ENCODE measurements at regions of chr1 and their contacts with region 1.

Region 1: GRCh38 chr1:160997323-160998038 is 23.5 kb downstream of the F11R start:
- DNase-seq: peak; percentile 83 to 90
- H3K4me3 ChIP-seq: no peak overlapping the region
- H3K27ac ChIP-seq: peak overlapping the region; percentile 33 to 84 (median 71)
- H3K4me1 ChIP-seq: peaks cover 0 to 22% (median 4%) of the 10 kb centered on the region in 4 donors
- H3K27me3 ChIP-seq: no peaks in the 10 kb centered on the region
- CTCF ChIP-seq: peak in 5 of 7 experiments; percentile 53 to 80 (median 71)
- EP300 ChIP-seq: no peak
- POLR2A ChIP-seq: no peak

Region 2: GRCh38 chr1:161098210-161099068 is 101.0 kb after region 1 on chr1 and contains the start of gene KLHDC9:
- intact Hi-C with region 1: loop called (anchors 10 kb)
- DNase-seq: peak; percentile 85 to 96
- H3K4me3 ChIP-seq: peak within 1 kb of the TSS; percentile 57 to 79 (median 72)
- H3K27ac ChIP-seq: peak within 1 kb of the TSS; percentile 55 to 77 (median 72)
- H3K4me1 ChIP-seq: peaks cover 14 to 30% (median 21%) of the 10 kb centered on the region in 4 donors
- H3K27me3 ChIP-seq: no peaks in the 10 kb centered on the region
- CTCF ChIP-seq: peak in 2 of 7 experiments; percentile 8 to 12
- EP300 ChIP-seq: no peak
- POLR2A ChIP-seq: no peak
- total RNA-seq, gene KLHDC9: 1.3 to 41.4 (median 2.4) TPM

Region 3: DNA sequence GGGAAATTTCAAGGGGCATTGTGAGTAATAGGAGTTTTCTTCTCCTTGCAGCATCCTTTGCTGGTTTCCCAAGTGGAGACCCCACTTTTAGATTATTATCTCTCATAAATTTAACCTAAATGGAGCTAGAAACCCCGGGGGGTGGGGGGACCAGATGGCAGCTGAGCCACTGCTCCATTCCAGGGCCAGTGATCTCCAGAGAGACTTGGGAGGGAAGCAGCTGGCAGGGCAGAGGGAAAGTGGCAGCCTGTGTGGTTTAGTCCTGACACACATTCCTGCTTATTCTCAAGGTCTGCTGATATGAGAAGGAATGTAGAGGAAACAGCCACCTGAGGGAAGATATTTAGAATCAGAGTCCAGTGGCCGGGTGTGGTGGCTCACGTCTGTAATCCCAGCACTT is 277.4 kb after region 1 on chr1:
- intact Hi-C with region 1: no loop called
- DNase-seq: peak in 1 of 2 donors; percentile 10
- H3K4me3 ChIP-seq: no peak overlapping the region
- H3K27ac ChIP-seq: no peak overlapping the region
- H3K4me1 ChIP-seq: peaks cover 0 to 14% (median 4%) of the 10 kb centered on the region in 4 donors
- H3K27me3 ChIP-seq: peaks cover 0 to 4% (median 0%) of the 10 kb centered on the region in 3 donors
- CTCF ChIP-seq: no peak
- EP300 ChIP-seq: no peak
- POLR2A ChIP-seq: no peak